Activated naive CD4-positive, alpha-beta T cell treated with anti-CD3 and anti-CD28 coated beads for 36 hours (primary cell): ENCODE measurements at regions of chr13 and their contacts with region 1.

Region 1: GRCh38 chr13:102555917-102556553 is 40.8 kb upstream of the TPP2 start:
- DNase-seq: peak; percentile 27
- H3K4me3 Mint-ChIP-seq: no peak overlapping the region
- H3K27ac Mint-ChIP-seq: no peak overlapping the region
- H3K4me1 Mint-ChIP-seq: peaks cover 3% of the 10 kb centered on the region
- H3K27me3 Mint-ChIP-seq: peaks cover 4% of the 10 kb centered on the region

Region 2: GRCh38 chr13:101514788-101515187 is 1041.2 kb before region 1 on chr13:
- CTCF ChIA-PET with region 1: no interaction called
- intact Hi-C with region 1: loop called (anchors 2 kb)
- DNase-seq: peak; percentile 29
- H3K4me3 Mint-ChIP-seq: no peak overlapping the region
- H3K27ac Mint-ChIP-seq: no peak overlapping the region
- H3K4me1 Mint-ChIP-seq: peaks cover 2% of the 10 kb centered on the region
- H3K27me3 Mint-ChIP-seq: peaks cover 4% of the 10 kb centered on the region

Region 3: DNA sequence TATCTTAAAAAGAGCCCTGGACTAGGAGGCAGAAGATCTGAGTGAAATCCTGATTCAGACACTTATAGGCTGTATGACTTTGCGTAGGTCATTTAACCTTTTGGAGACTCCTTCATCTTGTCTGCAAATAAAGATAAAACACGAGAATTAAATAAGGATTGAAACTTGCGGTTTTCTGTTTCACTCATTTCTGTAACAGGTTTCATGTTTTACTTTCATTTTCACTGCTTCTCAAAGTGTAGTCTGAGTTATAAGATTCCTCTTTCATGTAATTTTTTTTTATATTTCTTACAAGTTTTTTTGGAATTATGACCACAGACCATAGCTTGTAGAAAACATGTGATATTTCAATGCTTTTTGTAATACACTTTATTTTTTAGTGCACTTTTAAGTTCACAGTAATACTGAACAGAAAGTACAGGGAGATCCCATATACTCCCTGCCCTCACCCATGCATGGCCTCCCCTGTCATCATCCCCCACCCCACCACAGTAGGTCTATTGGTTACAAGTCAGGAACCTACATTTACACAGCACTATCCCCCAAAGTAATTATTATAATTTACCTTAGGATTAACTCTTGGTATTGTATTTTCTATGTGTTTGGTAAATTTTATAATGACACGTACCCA is 929.0 kb before region 1 on chr13:
- CTCF ChIA-PET with region 1: no interaction called
- intact Hi-C with region 1: no loop called
- DNase-seq: peak; percentile 58
- H3K4me3 Mint-ChIP-seq: peak overlapping the region; percentile 3
- H3K27ac Mint-ChIP-seq: no peak overlapping the region
- H3K4me1 Mint-ChIP-seq: peaks cover 43% of the 10 kb centered on the region
- H3K27me3 Mint-ChIP-seq: peaks cover 14% of the 10 kb centered on the region

Region 4: DNA sequence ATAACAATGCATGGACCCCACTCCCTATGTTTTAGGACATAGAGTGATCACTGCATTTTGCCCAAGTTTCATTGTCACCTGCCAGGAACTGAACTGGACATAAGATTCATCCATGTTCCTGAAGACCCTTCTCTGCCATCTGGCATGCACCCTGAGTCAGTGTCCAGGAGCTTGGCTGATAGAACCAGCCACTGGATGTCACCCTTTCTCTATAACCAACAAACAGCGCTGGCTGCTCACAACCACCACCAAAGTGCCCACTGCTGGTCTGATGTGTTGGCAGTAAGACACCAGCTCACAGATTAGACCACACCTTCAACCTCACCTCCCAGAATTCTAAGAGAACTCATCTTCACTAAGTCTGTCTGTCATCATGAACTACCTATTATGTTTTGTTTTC is 770.2 kb before region 1 on chr13:
- CTCF ChIA-PET with region 1: no interaction called
- intact Hi-C with region 1: loop called (anchors 5 kb)
- DNase-seq: no peak
- H3K4me3 Mint-ChIP-seq: no peak overlapping the region
- H3K27ac Mint-ChIP-seq: no peak overlapping the region
- H3K4me1 Mint-ChIP-seq: no peaks in the 10 kb centered on the region
- H3K27me3 Mint-ChIP-seq: peaks cover 18% of the 10 kb centered on the region

Region 5: DNA sequence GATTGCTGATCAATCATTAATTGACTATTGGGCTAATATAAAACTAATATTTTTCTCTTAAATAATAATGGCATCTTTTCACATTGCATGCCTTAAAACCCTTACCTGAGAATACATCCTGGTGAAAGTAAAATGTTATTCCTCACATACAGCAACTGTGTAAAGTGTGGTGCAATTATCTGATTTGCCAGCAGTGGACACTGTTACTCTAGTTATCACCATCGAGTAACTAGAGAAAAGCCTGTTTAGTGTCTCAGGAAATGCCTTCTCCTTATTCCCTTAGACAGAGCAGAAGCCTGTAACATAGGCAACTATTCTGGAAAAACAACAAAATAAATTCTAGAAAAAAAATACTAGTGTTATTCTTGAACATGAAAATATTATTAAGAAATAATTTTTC is 614.0 kb before region 1 on chr13:
- CTCF ChIA-PET with region 1: interaction called, 7 read pairs
- intact Hi-C with region 1: loop called (anchors 2 kb)
- DNase-seq: peak; percentile 26
- H3K4me3 Mint-ChIP-seq: no peak overlapping the region
- H3K27ac Mint-ChIP-seq: no peak overlapping the region
- H3K4me1 Mint-ChIP-seq: no peaks in the 10 kb centered on the region
- H3K27me3 Mint-ChIP-seq: peaks cover 2% of the 10 kb centered on the region

Region 6: DNA sequence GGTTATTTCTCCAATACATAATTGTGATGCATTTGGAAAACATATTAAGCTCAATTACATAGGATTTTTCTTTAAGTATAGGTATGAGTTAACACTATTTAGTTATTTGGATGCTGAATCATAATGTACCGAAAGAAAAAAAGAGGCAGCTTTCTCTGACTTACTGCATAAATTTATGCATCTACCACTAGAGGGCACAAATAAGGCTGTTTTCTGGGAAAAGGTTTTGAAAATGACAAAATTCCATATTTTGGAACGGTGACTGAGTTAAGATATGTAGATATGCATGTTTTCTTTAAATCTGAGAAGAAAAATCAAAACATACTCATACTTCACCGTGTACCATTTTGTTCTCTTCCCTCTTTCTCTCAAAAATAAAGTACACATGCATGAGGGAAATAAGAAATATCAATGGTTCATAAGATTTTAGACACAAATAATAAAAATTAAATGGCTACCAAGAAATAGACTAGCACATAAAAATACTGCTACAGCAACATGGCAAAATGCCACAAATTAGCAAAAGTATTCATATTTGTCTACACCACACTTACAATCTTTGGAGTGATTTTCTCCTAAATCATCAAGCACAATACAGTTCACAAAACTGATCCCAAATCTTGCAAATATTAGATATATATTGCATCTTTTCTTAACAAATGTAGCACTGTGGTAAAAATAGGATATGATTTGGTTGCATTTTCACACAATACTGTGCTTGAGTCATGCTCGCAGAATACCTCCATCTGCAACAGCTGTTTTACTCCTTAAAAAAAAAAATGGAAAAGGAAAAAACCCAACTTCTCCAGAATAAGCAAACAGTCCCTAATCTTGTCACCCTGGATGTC is 414.2 kb before region 1 on chr13:
- CTCF ChIA-PET with region 1: interaction called, 7 read pairs
- intact Hi-C with region 1: loop called (anchors 1 kb)
- DNase-seq: no peak
- H3K4me3 Mint-ChIP-seq: no peak overlapping the region
- H3K27ac Mint-ChIP-seq: no peak overlapping the region
- H3K4me1 Mint-ChIP-seq: no peaks in the 10 kb centered on the region
- H3K27me3 Mint-ChIP-seq: no peaks in the 10 kb centered on the region

Region 7: DNA sequence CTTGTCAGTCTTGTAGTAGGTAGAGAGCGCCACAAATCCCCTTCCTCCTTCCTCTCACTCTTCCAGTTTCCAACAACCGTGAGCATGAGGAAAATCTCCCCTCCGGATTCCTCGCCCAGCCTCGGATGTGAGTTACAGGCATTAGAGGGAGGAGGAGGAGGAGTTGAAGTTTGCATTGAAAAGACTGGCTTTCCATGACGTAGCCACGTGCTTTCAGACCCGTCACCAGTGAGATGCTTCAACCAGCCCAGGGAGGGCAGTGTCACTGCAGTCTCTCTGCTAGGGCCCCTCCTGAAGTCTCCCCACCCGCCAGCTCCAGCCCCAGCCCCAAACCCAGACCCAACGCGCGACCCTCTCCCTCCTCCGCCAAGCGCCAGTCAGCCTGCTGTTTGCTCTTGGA is 153.7 kb before region 1 on chr13:
- CTCF ChIA-PET with region 1: no interaction called
- intact Hi-C with region 1: loop called (anchors 5 kb)
- DNase-seq: peak; percentile 68
- H3K4me3 Mint-ChIP-seq: peak overlapping the region; percentile 62
- H3K27ac Mint-ChIP-seq: no peak overlapping the region
- H3K4me1 Mint-ChIP-seq: peaks cover 24% of the 10 kb centered on the region
- H3K27me3 Mint-ChIP-seq: peaks cover 47% of the 10 kb centered on the region